Activated CD8-positive, alpha-beta T cell treated with anti-CD3 and anti-CD28 coated beads for 36 hours (primary cell): ENCODE measurements at regions of chr5 and their contacts with region 1.

Region 1: DNA sequence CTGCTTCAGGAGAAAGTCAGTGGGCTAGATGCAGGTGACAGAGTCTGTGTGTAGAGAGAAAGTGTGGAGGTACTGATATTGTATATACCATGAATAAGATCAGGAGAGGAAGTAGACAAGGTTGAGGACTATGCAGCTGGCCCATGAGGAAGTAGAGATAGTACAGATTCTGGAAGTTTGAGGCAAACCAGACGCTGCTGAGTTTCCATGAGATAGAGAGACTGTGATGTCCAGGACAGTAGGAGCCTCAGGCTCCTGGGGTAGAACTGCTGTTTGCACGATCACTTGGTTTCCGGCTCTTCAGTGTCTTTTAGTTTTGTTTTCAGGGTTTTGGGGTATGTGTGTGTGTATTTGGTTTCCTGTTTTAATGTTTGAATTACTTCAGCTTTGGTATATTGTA is 13.6 kb downstream of the OTULINL start:
- DNase-seq: peak; percentile 70
- ATAC-seq: peak; percentile 76
- H3K4me3 Mint-ChIP-seq: peak overlapping the region; percentile 65
- H3K27ac Mint-ChIP-seq: peak overlapping the region; percentile 96
- H3K4me1 Mint-ChIP-seq: peaks cover 92% of the 10 kb centered on the region
- H3K27me3 Mint-ChIP-seq: no peaks in the 10 kb centered on the region
- CTCF ChIP-seq: no peak

Region 2: GRCh38 chr5:14581333-14581890 is 13.8 kb before region 1 on chr5 and contains the start of gene OTULINL:
- CTCF ChIA-PET with region 1: interaction called, 27 read pairs
- POLR2A ChIA-PET with region 1: interaction called, 48 read pairs
- intact Hi-C with region 1: no loop called
- DNase-seq: peak; percentile 90
- ATAC-seq: peak; percentile 96
- H3K4me3 Mint-ChIP-seq: peak within 1 kb of the TSS; percentile 79
- H3K27ac Mint-ChIP-seq: peak within 1 kb of the TSS; percentile 75
- H3K4me1 Mint-ChIP-seq: peaks cover 41% of the 10 kb centered on the region
- H3K27me3 Mint-ChIP-seq: peaks cover 10% of the 10 kb centered on the region
- CTCF ChIP-seq: no peak
- total RNA-seq, gene OTULINL: 19.7 to 21.1 TPM